GM12878 (cell line): ENCODE measurements at regions of chr2 and their contacts with region 1.

Region 1: DNA sequence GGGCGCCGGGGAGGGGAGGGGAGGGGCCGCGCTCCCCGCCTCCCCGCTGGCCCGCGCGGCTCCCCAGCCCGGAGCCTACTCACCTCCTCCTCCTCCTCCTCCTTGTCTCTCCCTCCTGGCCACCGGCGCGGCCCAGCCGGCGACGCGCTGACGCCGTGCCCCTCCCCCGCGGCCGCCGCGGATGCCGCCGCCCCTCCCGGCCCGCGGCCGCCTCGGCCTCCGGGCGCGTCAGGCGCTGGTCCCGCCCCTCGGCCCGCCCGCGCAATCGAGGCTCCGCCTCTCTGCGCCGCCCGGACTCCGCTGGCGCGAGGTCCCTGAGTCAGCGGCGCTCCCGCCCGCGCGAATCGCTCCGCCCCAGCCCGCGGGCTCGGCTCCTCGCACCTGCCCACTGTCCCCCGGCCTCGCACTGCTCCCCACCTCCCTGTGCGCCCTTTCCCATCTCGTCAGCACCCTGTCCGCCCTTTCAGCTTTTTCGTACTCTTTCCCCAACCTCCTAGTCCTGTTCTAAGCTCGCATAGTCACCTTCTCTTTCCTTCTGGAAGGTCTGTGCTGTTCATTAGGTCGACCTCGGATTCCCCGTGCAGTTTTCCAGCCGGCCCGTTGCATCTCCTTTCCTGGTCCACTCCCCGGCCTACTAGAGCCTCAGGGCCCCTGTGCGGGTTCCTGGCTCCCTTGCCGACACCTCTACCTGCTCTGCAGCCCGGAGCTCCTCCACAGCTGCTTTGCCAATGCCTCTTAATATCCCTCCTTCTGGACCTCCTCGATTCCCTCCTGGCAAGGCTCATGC is 187.4 kb downstream of the ZEB2 start:
- DNase-seq: no peak
- ATAC-seq: peak; percentile 90
- H3K4me3 ChIP-seq: peak overlapping the region; percentile 56; the same call in 1 of the 2 replicates
- H3K27ac ChIP-seq: peak overlapping the region; percentile 78
- H3K4me1 ChIP-seq: peaks cover 8% of the 10 kb centered on the region
- H3K27me3 ChIP-seq: no peaks in the 10 kb centered on the region
- CTCF ChIP-seq: no peak
- EP300 ChIP-seq: no peak
- POLR2A ChIP-seq: peak; percentile 70
- RAD21 ChIP-seq: peak; percentile 19; the same call in 1 of the 2 replicates

Region 2: GRCh38 chr2:144132357-144132756 is 200.2 kb before region 1 on chr2:
- CTCF ChIA-PET with region 1: no interaction called
- POLR2A ChIA-PET with region 1: no interaction called
- RAD21 ChIA-PET with region 1: no interaction called
- SMC1A ChIA-PET with region 1: no interaction called
- in situ Hi-C with region 1: no loop called
- intact Hi-C with region 1: no loop called
- DNase-seq: no peak
- ATAC-seq: no peak
- H3K4me3 ChIP-seq: no peak overlapping the region
- H3K27ac ChIP-seq: no peak overlapping the region
- H3K4me1 ChIP-seq: no peaks in the 10 kb centered on the region
- H3K27me3 ChIP-seq: no peaks in the 10 kb centered on the region
- CTCF ChIP-seq: no peak
- EP300 ChIP-seq: no peak
- POLR2A ChIP-seq: no peak
- RAD21 ChIP-seq: no peak

Region 3: DNA sequence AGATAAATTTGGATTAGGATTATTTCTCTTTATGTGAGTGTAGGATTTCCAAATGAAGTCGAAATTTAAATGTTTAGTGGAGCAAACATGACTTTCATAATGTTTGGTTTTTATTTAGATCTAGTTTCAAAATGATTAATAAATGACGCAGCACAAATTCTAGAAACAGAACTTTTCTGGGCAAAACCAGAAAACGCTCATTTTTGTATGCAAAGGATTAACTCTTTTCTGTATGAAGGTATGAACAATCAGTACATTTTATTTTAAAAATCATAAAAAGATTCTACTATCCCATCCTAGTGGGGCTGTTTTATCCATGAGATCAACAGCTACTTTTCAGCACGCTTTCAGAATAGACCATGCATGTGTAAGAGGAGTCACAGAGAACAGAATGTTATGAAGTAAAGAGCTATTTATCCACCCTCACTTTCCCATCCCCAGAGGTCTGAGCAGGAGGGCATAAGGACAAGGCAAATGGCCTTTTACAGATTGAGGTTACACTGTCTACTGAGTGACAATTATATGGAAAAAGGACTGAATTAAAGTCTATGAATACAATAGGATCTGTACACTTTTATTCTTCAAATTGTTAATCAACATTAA is 83.4 kb before region 1 on chr2:
- CTCF ChIA-PET with region 1: no interaction called
- POLR2A ChIA-PET with region 1: interaction called, 4 read pairs
- RAD21 ChIA-PET with region 1: no interaction called
- SMC1A ChIA-PET with region 1: no interaction called
- in situ Hi-C with region 1: no loop called
- intact Hi-C with region 1: loop called (anchors 5 kb)
- DNase-seq: no peak
- ATAC-seq: peak; percentile 80
- H3K4me3 ChIP-seq: peak overlapping the region; percentile 25; the same call in 1 of the 2 replicates
- H3K27ac ChIP-seq: peak overlapping the region; percentile 74
- H3K4me1 ChIP-seq: peaks cover 14% of the 10 kb centered on the region; the same call in 1 of the 2 replicates
- H3K27me3 ChIP-seq: no peaks in the 10 kb centered on the region
- CTCF ChIP-seq: no peak
- EP300 ChIP-seq: peak in 1 of 2 experiments; percentile 33; a peak in 1 of 4 replicates
- POLR2A ChIP-seq: no peak
- RAD21 ChIP-seq: no peak

Region 4: GRCh38 chr2:144477957-144478311 is 145.4 kb after region 1 on chr2:
- CTCF ChIA-PET with region 1: no interaction called
- POLR2A ChIA-PET with region 1: no interaction called
- RAD21 ChIA-PET with region 1: no interaction called
- SMC1A ChIA-PET with region 1: no interaction called
- in situ Hi-C with region 1: no loop called
- intact Hi-C with region 1: no loop called
- DNase-seq: no peak
- ATAC-seq: no peak
- H3K4me3 ChIP-seq: no peak overlapping the region
- H3K27ac ChIP-seq: no peak overlapping the region
- H3K4me1 ChIP-seq: no peaks in the 10 kb centered on the region
- H3K27me3 ChIP-seq: peaks cover 0 to 2% of the 10 kb centered on the region in 2 experiments; a peak in 2 of 4 replicates
- CTCF ChIP-seq: no peak
- EP300 ChIP-seq: no peak
- POLR2A ChIP-seq: no peak
- RAD21 ChIP-seq: no peak